ENCODE measurements at regions of chr17 and their contacts with region 1.

Region 1: GRCh38 chr17:66373944-66374817 is 71.8 kb downstream of the PRKCA start:
- DNase-seq: peak in 4 of 6 donors; percentile 19 to 38 (median 32)
- ATAC-seq: peak; percentile 44 to 78 (median 74)
- H3K4me3 ChIP-seq: no peak overlapping the region
- H3K27ac ChIP-seq: peak overlapping the region; percentile 35 to 74 (median 67)
- H3K4me1 ChIP-seq: no peaks in the 10 kb centered on the region
- H3K27me3 ChIP-seq: no peaks in the 10 kb centered on the region
- CTCF ChIP-seq: no peak

Region 2: GRCh38 chr17:66431910-66432683 is 57.9 kb after region 1 on chr17:
- intact Hi-C with region 1: loop called in 1 of 3 experiments (anchors 10 kb)
- DNase-seq: no peak
- ATAC-seq: peak in 2 of 4 donors; percentile 35 to 51
- H3K4me3 ChIP-seq: no peak overlapping the region
- H3K27ac ChIP-seq: no peak overlapping the region
- H3K4me1 ChIP-seq: no peaks in the 10 kb centered on the region
- H3K27me3 ChIP-seq: no peaks in the 10 kb centered on the region
- CTCF ChIP-seq: no peak

Region 3: DNA sequence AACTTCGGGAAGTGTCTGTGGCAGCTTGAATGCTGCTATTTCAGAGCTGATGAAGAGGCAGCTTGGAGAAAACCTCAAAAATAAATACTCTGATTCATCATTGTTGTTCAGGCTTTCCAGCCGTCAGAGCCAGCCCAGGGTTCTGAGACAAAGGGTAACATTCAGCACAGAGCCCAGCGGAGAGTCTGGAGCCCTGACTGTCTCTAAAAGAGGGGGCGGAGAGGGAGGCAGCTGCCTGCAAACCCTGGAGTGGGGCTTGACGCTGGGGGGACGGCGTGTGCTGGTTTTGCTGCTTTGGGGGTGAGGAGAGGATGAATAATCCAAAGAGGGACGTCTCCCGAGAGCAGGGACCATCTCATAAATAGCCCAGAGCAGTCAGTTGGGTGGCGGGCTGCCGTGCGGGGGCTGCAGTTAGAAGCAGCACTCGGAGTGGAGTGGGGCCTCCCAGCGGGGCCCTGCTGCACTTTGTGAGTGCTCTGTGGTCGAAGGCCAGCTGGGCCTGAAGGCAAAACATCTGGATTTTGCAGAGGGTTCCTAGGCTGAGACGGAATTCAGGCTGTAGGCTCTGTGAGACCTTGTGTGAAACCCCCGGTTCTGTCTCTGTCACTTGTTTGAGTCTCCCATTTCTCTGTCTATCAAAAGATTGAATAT is 166.1 kb after region 1 on chr17:
- intact Hi-C with region 1: no loop called
- DNase-seq: peak in 1 of 6 donors; percentile 17
- ATAC-seq: peak in 3 of 4 donors; percentile 24 to 71 (median 65)
- H3K4me3 ChIP-seq: no peak overlapping the region
- H3K27ac ChIP-seq: no peak overlapping the region
- H3K4me1 ChIP-seq: no peaks in the 10 kb centered on the region
- H3K27me3 ChIP-seq: no peaks in the 10 kb centered on the region
- CTCF ChIP-seq: no peak

Measured in pancreas (tissue), 10 donors.